Activated CD4-positive, alpha-beta T cell treated with anti-CD3 and anti-CD28 coated beads, Interleukin-2, amount 10 ng/mL, durations not matched to agents 24 days and 14 days (primary cell): ENCODE measurements at regions of chr1 and their contacts with region 1.

Region 1: DNA sequence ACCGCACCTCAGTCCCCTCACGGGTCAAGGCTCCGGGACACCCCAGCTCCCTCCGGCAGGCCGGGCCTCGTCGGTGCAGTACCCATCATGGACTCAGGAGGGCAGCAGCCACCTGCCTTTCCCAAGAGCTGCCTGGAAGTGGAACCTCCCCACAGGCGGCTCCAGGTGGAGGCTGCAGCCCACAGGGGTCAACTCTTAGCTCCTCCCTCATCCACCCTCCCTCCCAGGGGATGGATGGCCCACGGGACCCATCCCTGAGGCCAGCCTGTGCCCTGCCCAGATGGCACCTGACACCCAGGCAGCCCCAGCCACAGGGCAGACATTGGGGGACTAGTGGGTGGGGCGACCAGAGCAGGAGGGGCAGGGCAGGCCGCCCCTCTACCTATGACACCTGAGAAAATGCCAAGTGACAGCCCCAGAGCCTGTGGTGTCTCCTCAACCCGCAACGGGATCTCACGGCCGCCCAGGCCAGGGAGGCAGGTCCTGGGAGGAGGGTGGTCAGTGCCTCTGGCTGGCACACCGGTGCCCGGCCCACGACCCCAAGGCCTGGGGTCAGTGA is 1.2 kb upstream of the ARHGEF16 start:
- DNase-seq: peak; percentile 93
- H3K4me3 Mint-ChIP-seq: no peak overlapping the region
- H3K27ac Mint-ChIP-seq: no peak overlapping the region
- H3K4me1 Mint-ChIP-seq: no peaks in the 10 kb centered on the region
- H3K27me3 Mint-ChIP-seq: peaks cover 15% of the 10 kb centered on the region

Region 2: GRCh38 chr1:3417082-3417739 is 36.1 kb before region 1 on chr1:
- intact Hi-C with region 1: no loop called
- DNase-seq: no peak
- H3K4me3 Mint-ChIP-seq: no peak overlapping the region
- H3K27ac Mint-ChIP-seq: no peak overlapping the region
- H3K4me1 Mint-ChIP-seq: no peaks in the 10 kb centered on the region
- H3K27me3 Mint-ChIP-seq: peaks cover 2% of the 10 kb centered on the region

Region 3: DNA sequence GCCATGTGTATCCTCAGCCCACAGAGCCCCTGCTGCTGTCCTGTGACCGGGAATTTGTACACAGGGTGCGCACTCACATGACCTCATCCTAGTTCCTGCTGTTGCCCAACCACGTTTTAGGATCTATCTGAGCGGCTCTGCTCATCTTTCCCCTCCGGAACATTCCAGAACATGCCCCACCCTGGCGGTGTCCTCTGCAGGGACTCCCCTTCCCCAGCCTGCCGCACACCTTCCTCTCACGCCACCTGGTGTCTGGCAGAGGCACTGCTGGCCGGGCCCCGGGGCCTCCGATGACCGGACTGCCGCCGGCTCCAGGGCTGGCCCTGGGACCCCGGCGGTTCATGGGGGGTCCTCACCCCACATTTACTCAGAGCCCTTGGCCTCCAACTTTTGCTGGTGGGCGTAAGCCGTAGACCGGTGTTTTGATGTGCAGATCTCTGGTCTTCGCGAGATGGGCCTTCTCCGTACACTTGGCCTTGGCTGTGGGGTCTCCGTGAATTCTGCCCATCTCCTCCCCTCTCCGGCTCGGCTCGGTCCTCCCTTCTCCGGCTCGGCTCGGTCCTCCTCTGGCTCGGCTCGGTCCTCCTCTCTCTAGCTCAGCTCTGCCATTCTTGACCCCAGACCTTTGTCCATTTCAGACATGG is 30.6 kb after region 1 on chr1:
- intact Hi-C with region 1: loop called (anchors 1 kb)
- DNase-seq: peak; percentile 86
- H3K4me3 Mint-ChIP-seq: no peak overlapping the region
- H3K27ac Mint-ChIP-seq: no peak overlapping the region
- H3K4me1 Mint-ChIP-seq: no peaks in the 10 kb centered on the region
- H3K27me3 Mint-ChIP-seq: no peaks in the 10 kb centered on the region

Region 4: GRCh38 chr1:3611170-3612019 is 158.1 kb after region 1 on chr1 and contains the start of gene MEGF6:
- intact Hi-C with region 1: no loop called
- DNase-seq: peak; percentile 67
- H3K4me3 Mint-ChIP-seq: peak within 1 kb of the TSS; percentile 71
- H3K27ac Mint-ChIP-seq: no peak within 1 kb of the TSS
- H3K4me1 Mint-ChIP-seq: no peaks in the 10 kb centered on the region
- H3K27me3 Mint-ChIP-seq: peaks cover 20% of the 10 kb centered on the region
- total RNA-seq, gene MEGF6: 1.7 and 2.1 TPM in 2 replicates